ENCODE measurements at regions of chr6 and their contacts with region 1.

Region 1: DNA sequence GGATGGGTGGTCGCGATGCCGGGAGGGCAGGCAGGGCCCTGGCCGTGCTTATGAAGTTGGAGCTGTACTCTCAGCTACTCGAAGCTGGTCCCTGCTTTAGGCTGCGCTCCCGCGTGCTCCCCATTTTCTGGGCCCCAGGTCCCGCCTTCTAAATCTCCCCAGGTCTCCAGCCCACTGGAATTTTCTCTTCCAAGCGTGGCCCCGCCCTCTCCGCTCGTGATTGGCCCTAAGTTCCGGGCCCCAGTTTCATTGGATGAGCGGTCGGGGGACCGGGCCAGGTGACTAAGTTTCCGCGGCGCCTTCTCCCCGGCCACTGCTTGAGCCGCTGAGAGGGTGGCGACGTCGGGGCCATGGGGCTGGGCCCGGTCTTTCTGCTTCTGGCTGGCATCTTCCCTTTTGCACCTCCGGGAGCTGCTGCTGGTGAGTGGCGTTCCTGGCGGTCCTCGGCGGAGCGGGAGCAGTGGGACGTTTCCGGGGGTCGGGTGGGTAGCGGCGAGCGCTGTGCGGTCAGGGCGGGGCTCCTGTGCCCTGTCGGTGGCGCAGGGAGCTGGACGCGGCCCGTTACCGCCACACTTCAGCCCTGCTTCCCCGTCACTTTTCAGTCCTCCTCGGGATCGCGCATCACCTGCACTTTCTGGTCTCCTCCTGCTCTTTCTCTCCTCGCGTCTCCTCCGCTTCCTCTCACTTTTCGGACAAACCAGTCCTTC is at the start of gene MICA:
- DNase-seq: peak; percentile 73
- H3K4me3 ChIP-seq: peak within 1 kb of the TSS; percentile 79
- H3K27ac ChIP-seq: peak within 1 kb of the TSS; percentile 50
- H3K4me1 ChIP-seq: peaks cover 25% of the 10 kb centered on the region
- CTCF ChIP-seq: no peak
- total RNA-seq, gene MICA: 11.9 and 15.3 TPM in 2 replicates

Region 2: DNA sequence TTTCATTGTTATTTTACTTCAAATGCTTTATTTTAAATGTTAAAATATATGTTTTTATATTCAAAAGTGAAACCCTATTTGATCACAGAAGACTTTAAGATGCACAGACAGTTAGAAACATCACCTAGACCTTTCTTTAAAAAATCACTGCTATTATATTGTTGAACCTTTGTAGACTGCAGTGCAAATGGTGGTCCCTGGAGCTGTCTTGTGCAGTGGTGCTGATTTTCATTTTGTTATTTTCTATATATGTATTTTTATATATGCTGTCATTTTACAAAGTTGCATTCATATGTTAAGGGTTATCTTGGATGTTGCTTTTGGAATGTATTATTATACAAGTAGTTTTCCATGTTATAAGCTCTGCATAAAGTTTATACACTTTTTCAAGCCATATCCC is 27.7 kb before region 1 on chr6:
- CTCF ChIA-PET with region 1: no interaction called
- POLR2A ChIA-PET with region 1: no interaction called
- intact Hi-C with region 1: no loop called
- DNase-seq: no peak
- H3K4me3 ChIP-seq: no peak overlapping the region
- H3K27ac ChIP-seq: no peak overlapping the region
- H3K4me1 ChIP-seq: no peaks in the 10 kb centered on the region
- CTCF ChIP-seq: no peak

Region 3: DNA sequence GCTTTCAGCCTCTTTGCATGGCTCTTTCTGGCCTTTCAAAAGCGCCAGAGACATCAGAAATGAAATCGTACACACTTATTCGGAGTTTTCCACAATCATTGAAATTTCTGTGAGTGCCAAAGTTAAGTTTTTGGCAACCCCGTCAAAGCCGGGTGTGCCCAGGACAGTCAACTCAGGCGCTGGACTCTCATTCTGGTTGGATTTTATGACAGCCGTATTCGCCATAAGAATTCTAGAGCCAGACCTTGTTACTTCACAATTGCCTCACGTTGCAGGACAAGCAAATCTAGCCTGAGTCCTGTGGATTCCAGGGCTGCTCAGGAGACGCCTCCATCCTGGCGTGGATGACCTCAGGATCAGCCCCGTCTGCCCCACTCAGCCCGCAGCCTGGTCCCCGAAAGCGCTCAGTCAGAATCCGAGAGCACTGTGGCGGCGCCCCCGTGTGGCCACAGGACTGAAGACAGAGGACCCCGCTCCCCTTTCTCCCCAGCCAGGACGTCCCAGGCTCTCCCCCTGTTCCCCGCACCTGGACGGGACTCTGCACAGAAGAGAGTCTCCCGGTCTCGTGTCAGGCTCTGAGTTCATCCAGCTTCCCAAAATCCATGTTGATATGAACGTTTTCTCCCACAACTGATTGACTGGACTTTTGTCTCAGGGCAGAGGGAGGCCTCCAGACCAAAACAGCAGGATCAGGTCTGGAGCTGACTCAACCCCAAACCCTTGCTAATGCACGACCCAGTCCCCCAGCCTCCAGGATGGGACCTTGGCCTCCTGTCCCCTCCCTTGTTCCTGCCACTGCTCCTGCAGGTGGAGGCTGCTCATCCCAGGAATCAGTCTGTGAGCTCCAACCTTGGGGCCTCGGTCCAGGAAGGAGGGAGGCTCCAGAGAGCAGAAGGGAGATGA is 38.2 kb after region 1 on chr6:
- CTCF ChIA-PET with region 1: interaction called, 4 read pairs
- POLR2A ChIA-PET with region 1: interaction called, 4 read pairs
- intact Hi-C with region 1: loop called (anchors 1 kb)
- DNase-seq: peak; percentile 78
- H3K4me3 ChIP-seq: no peak overlapping the region
- H3K27ac ChIP-seq: no peak overlapping the region
- H3K4me1 ChIP-seq: no peaks in the 10 kb centered on the region
- CTCF ChIP-seq: peak; percentile 95

Region 4: GRCh38 chr6:31493875-31494694 is 90.6 kb after region 1 on chr6:
- CTCF ChIA-PET with region 1: no interaction called
- POLR2A ChIA-PET with region 1: interaction called, 3 read pairs
- intact Hi-C with region 1: loop called (anchors 2 kb)
- DNase-seq: peak; percentile 88
- H3K4me3 ChIP-seq: peak overlapping the region; percentile 82
- H3K27ac ChIP-seq: peak overlapping the region; percentile 78
- H3K4me1 ChIP-seq: peaks cover 35% of the 10 kb centered on the region
- CTCF ChIP-seq: peak; percentile 95

Region 5: DNA sequence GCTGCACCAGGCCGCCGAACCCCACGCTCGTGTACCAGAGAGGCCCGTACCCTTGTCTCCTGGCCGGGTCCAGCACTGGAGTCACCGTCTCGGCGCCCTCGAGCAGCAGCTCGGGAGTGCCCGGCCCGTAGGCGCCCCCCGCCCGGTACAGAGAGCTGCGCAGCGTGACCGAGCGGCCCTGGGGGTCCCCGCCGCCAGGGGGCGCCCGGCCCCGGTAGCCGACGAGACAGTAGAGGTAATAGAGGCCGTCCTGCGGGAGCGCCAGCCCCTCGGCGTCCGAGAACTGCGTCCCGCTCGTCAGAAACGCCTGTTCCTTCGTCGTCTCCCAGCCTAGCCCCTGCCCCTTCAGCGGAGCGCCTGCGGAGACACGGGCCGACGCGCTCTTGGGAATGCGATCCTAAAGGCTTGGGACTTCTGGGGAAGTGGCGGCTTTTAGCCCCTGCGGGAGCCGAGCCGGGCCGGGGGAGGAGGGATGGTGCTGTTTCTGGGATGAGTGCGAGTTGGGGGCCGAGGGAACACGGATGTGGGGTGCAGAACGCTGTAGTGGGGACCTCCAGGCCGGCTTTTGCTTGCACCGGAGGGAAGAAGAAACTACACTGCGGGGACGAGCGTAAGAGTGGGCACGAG is 177.5 kb after region 1 on chr6:
- CTCF ChIA-PET with region 1: no interaction called
- POLR2A ChIA-PET with region 1: no interaction called
- intact Hi-C with region 1: loop called (anchors 10 kb)
- DNase-seq: peak; percentile 89
- H3K4me3 ChIP-seq: peak overlapping the region; percentile 87
- H3K27ac ChIP-seq: peak overlapping the region; percentile 86
- H3K4me1 ChIP-seq: peaks cover 78% of the 10 kb centered on the region
- CTCF ChIP-seq: peak; percentile 93